Left cardiac atrium (tissue), 4 donors: ENCODE measurements at regions of chr3 and their contacts with region 1.

Region 1: GRCh38 chr3:167406875-167407492 is 26.9 kb upstream of the ZBBX start:
- DNase-seq: peak; percentile 25
- ATAC-seq: peak; percentile 81 to 90

Region 2: DNA sequence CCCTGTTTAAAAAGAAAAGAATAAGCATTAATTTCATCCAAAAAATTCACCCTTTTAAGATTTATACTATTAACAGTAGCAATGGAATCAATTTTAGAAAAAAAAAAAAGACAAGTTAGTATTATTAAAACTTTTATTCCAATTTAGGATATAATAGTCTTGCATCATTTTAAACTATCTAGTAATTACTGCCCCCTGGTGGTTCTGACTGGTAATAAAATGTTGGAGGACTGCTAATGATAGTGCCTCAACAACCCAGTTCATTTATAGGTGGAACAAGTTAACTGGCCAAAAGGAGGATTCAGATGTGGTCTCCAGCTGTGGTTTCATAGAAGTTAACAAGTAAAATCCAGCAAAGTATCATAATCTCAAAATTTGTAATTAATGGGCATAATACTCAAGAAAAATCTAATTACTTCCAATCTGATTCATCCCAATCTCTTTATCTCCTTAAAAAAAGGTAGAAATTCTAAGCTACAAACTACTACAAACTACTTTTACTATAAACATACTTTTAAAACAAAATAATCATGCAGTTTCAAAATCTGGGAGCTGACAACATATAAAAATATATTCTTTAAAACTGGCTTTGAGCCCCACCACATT is 277.5 kb after region 1 on chr3:
- intact Hi-C with region 1: loop called (anchors 2 to 5 kb)
- DNase-seq: no peak
- ATAC-seq: peak in 1 of 2 donors; percentile 60

Region 3: GRCh38 chr3:168121184-168122017 is 714.4 kb after region 1 on chr3:
- intact Hi-C with region 1: no loop called
- DNase-seq: peak; percentile 61
- ATAC-seq: peak; percentile 69 to 73